ENCODE measurements at regions of chr11 and their contacts with region 1.

Region 1: DNA sequence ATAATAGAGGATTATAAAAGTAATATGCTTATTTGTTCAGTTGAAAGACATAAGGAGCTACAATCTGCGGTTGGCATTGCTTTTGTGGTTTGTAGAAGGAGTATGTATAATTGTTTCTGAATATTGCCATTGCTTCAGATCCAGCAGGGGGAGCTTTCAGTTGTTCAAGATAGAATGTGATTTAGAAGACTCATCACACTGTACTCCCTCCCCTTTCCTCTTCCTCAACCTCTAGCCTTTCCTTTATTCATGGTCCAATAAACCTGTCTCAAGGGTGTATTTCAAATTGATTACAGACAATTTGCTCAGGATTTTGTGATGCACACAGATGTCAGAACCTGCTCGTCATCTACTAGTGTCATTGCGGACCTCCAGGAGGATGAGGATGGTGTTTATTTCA is 9.8 kb downstream of the PRMT3 start:
- DNase-seq: peak; percentile 40
- H3K4me3 ChIP-seq: no peak overlapping the region
- H3K27ac ChIP-seq: no peak overlapping the region
- H3K4me1 ChIP-seq: no peaks in the 10 kb centered on the region
- CTCF ChIP-seq: peak; percentile 76

Region 2: DNA sequence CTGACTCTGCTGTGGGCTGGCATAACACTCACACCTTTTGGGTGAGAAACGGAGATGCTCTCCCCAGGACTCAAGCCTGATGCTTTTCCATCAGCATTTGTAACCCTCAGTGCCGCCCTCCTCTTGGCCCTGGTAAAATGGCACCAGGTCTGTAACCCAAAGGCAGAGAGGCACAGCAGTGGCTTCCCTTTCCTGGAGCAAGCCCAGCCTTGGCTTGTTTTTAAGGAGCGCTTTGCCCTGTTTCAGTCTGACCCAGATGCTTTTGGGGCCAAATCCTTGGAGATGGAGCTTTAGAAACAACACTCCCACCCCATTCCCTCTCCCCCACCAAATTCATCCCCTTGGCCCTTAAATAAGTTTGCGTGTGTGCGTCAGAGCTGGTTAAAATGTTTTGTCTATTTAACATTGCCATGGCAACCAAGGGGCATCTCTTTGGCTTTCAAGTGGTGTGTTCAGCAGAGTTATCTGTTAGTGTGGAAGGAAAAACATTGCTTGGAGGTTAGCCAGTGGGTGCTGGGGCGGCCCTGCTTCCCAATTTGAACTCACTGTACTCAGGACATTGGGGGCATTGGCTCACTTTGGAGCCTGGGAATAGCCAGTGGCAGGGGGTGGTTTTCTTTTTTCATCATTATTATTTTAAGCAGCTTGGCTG is 550.5 kb before region 1 on chr11:
- CTCF ChIA-PET with region 1: no interaction called
- POLR2A ChIA-PET with region 1: no interaction called
- intact Hi-C with region 1: no loop called
- DNase-seq: no peak
- H3K4me3 ChIP-seq: no peak overlapping the region
- H3K27ac ChIP-seq: no peak overlapping the region
- H3K4me1 ChIP-seq: no peaks in the 10 kb centered on the region
- CTCF ChIP-seq: no peak

Region 3: GRCh38 chr11:20110908-20111669 is 286.2 kb before region 1 on chr11:
- CTCF ChIA-PET with region 1: no interaction called
- POLR2A ChIA-PET with region 1: no interaction called
- intact Hi-C with region 1: no loop called
- DNase-seq: peak; percentile 65
- H3K4me3 ChIP-seq: no peak overlapping the region
- H3K27ac ChIP-seq: no peak overlapping the region
- H3K4me1 ChIP-seq: no peaks in the 10 kb centered on the region
- CTCF ChIP-seq: peak; percentile 83

Region 4: GRCh38 chr11:20443596-20443995 is 46.3 kb after region 1 on chr11:
- CTCF ChIA-PET with region 1: no interaction called
- POLR2A ChIA-PET with region 1: no interaction called
- intact Hi-C with region 1: loop called (anchors 10 kb)
- DNase-seq: peak; percentile 25
- H3K4me3 ChIP-seq: no peak overlapping the region
- H3K27ac ChIP-seq: no peak overlapping the region
- H3K4me1 ChIP-seq: no peaks in the 10 kb centered on the region
- CTCF ChIP-seq: peak; percentile 78